HAP-1 (cell line): ENCODE measurements at regions of chr14 and their contacts with region 1.

Region 1: GRCh38 chr14:103808403-103809001 is 38.9 kb downstream of the PPP1R13B start:
- DNase-seq: peak; percentile 51 to 87
- H3K4me3 ChIP-seq: no peak overlapping the region
- H3K4me1 ChIP-seq: no peaks in the 10 kb centered on the region
- H3K27me3 ChIP-seq: no peaks in the 10 kb centered on the region

Region 2: GRCh38 chr14:103763730-103764488 is 44.6 kb before region 1 on chr14:
- in situ Hi-C with region 1: no loop called
- DNase-seq: no peak
- H3K4me3 ChIP-seq: no peak overlapping the region
- H3K4me1 ChIP-seq: no peaks in the 10 kb centered on the region
- H3K27me3 ChIP-seq: no peaks in the 10 kb centered on the region

Region 3: DNA sequence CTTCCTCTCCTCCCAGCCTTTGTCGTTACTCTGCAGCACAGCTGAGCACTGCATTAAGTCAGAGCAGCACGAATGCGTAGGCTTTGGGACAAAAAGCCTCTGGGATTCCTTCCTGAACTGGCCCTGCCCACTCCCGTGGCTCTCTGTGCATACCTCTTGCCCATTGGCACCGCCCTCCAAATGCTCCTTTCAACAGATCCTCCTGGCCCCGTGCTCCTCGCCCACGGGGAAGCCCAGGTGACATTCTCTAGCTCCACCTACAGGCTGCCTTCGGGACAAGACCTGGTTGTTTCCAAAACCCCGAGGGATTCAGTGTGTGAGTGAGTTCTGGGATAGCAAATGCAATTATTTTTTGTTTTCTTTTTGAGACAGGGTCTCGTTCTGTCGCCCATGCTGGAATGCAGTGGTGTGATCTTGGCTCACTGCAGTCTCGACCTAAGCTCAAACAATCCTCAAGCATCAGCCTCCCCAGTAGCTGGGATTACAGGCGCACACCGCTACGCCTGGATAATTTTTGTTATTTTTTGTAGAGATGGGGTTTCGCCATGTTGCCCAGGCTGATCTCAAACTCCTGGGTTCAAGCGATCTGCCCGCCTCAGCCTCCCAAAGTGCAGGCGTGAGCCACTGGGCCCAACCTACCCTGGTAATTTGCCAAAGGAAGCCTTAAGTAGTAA is 101.9 kb after region 1 on chr14:
- in situ Hi-C with region 1: loop called (anchors 5 kb)
- DNase-seq: peak; percentile 73 to 89
- H3K4me3 ChIP-seq: no peak overlapping the region
- H3K4me1 ChIP-seq: no peaks in the 10 kb centered on the region
- H3K27me3 ChIP-seq: no peaks in the 10 kb centered on the region

Region 4: DNA sequence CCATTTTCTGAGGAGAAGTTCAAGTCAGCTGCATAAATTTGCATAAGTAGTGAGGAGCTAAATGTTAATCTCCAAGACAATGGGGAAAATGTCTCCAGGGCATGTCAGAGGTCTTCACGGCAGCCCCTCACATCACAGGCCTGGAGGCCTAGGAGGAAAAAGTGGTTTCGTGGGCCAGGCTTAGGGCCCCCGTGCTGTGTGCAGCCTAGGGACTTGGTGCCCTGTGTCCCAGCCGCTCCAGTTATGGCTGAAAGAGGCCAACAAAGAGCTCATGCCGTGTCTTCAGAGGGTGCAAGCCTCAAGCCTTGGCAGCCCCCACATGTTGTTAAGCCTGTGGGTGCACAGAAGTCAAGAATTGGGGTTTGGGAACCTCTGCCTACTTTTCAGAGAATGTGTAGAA is 175.7 kb after region 1 on chr14:
- in situ Hi-C with region 1: loop called (anchors 5 kb)
- DNase-seq: no peak
- H3K4me3 ChIP-seq: no peak overlapping the region
- H3K4me1 ChIP-seq: no peaks in the 10 kb centered on the region
- H3K27me3 ChIP-seq: no peaks in the 10 kb centered on the region